ENCODE measurements at regions of chr22 and their contacts with region 1.

Region 1: DNA sequence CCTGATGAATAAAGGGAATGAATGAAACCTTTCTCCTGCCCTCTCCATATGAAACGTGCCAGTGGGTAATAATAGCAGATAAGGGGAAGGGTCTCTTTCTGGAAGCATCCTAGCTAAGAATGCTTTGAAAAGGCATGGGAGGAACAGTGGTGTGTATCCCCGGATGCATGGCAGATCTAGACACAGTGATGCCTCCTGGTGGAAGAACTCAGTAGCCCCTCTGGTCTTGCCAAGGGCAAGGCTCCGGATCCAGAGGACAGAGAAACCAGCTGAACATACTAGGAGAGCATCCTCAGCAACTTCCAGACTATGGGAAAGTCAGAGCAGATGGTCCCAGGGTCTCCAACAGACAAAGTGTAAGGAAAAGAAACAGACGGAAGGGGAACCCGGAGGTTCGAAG is 6.4 kb downstream of the BAIAP2L2 start:
- DNase-seq: no peak
- H3K4me3 Mint-ChIP-seq: no peak overlapping the region
- H3K27ac Mint-ChIP-seq: no peak overlapping the region
- H3K4me1 Mint-ChIP-seq: no peaks in the 10 kb centered on the region
- H3K27me3 Mint-ChIP-seq: no peaks in the 10 kb centered on the region

Region 2: GRCh38 chr22:38056969-38057891 is 46.9 kb before region 1 on chr22 and contains the start of gene PICK1:
- CTCF ChIA-PET with region 1: interaction called, 5 read pairs
- intact Hi-C with region 1: loop called (anchors 5 kb)
- DNase-seq: peak; percentile 87
- H3K4me3 Mint-ChIP-seq: peak within 1 kb of the TSS; percentile 94
- H3K27ac Mint-ChIP-seq: peak within 1 kb of the TSS; percentile 94
- H3K4me1 Mint-ChIP-seq: peaks cover 14% of the 10 kb centered on the region
- H3K27me3 Mint-ChIP-seq: no peaks in the 10 kb centered on the region
- total RNA-seq, gene PICK1: 17.9 to 22.1 TPM